GM12878 (cell line): ENCODE measurements at regions of chr1 and their contacts with region 1.

Region 1: GRCh38 chr1:182614796-182615454 is 10.7 kb upstream of the RGS16 start:
- DNase-seq: no peak
- ATAC-seq: peak; percentile 62
- H3K4me3 ChIP-seq: peak overlapping the region; percentile 63
- H3K27ac ChIP-seq: peak overlapping the region; percentile 95
- H3K4me1 ChIP-seq: peaks cover 66% of the 10 kb centered on the region
- H3K27me3 ChIP-seq: no peaks in the 10 kb centered on the region
- CTCF ChIP-seq: no peak
- EP300 ChIP-seq: peak in 1 of 2 experiments; percentile 54; a peak in 3 of 4 replicates
- POLR2A ChIP-seq: peak; percentile 84
- RAD21 ChIP-seq: peak; percentile 12; the same call in 1 of the 2 replicates

Region 2: GRCh38 chr1:182493063-182493462 is 121.9 kb before region 1 on chr1:
- CTCF ChIA-PET with region 1: no interaction called
- POLR2A ChIA-PET with region 1: no interaction called
- RAD21 ChIA-PET with region 1: no interaction called
- SMC1A ChIA-PET with region 1: no interaction called
- in situ Hi-C with region 1: no loop called
- intact Hi-C with region 1: no loop called
- DNase-seq: no peak
- ATAC-seq: no peak
- H3K4me3 ChIP-seq: no peak overlapping the region
- H3K27ac ChIP-seq: no peak overlapping the region
- H3K4me1 ChIP-seq: no peaks in the 10 kb centered on the region
- H3K27me3 ChIP-seq: no peaks in the 10 kb centered on the region; a peak in 2 of 4 replicates
- CTCF ChIP-seq: no peak
- EP300 ChIP-seq: no peak
- POLR2A ChIP-seq: no peak
- RAD21 ChIP-seq: no peak

Region 3: DNA sequence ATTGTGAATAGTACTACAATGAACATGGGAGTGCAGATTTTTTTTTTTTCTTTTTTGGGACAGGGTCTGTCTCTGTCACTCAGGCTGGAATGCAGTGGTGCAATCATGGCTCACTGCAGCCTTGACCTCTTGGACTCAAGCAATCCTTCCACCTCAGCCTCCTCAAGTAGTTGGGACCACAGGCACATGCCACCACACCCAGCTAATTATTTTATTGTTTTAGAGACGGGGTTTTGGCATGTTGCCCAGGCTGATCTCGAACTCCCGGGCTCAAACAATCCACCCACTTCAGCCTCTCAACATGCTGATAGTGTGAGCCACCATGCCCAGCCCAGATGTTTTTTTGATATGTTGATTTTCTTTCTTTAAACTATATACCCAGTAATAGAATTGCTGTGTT is 107.3 kb before region 1 on chr1:
- CTCF ChIA-PET with region 1: no interaction called
- POLR2A ChIA-PET with region 1: no interaction called
- RAD21 ChIA-PET with region 1: no interaction called
- SMC1A ChIA-PET with region 1: no interaction called
- in situ Hi-C with region 1: no loop called
- intact Hi-C with region 1: no loop called
- DNase-seq: no peak
- ATAC-seq: no peak
- H3K4me3 ChIP-seq: no peak overlapping the region
- H3K27ac ChIP-seq: no peak overlapping the region
- H3K4me1 ChIP-seq: no peaks in the 10 kb centered on the region
- H3K27me3 ChIP-seq: no peaks in the 10 kb centered on the region
- CTCF ChIP-seq: no peak
- EP300 ChIP-seq: no peak
- POLR2A ChIP-seq: no peak
- RAD21 ChIP-seq: no peak

Region 4: DNA sequence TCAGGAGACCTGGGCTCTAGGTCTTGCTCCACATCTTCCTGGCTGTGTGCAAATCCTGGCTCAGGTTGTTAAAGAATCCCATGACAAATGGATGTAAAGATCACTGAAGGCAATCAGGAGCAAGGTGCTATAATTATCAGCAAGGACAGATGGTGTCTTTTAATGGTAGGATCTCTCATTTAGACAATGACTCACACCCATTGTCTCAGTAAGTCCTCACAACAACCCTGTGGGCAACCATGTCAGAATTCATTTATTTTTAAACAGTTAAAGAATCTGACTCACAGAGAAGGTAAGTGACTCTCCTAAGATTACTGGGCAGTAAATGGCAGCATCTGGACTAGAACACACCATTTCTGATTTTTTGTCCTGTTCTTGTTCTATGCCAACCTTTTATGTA is 58.6 kb before region 1 on chr1:
- CTCF ChIA-PET with region 1: no interaction called
- POLR2A ChIA-PET with region 1: no interaction called
- RAD21 ChIA-PET with region 1: no interaction called
- SMC1A ChIA-PET with region 1: no interaction called
- in situ Hi-C with region 1: no loop called
- intact Hi-C with region 1: no loop called
- DNase-seq: no peak
- ATAC-seq: no peak
- H3K4me3 ChIP-seq: no peak overlapping the region
- H3K27ac ChIP-seq: no peak overlapping the region
- H3K4me1 ChIP-seq: no peaks in the 10 kb centered on the region
- H3K27me3 ChIP-seq: no peaks in the 10 kb centered on the region
- CTCF ChIP-seq: no peak
- EP300 ChIP-seq: no peak
- POLR2A ChIP-seq: no peak
- RAD21 ChIP-seq: no peak

Region 5: DNA sequence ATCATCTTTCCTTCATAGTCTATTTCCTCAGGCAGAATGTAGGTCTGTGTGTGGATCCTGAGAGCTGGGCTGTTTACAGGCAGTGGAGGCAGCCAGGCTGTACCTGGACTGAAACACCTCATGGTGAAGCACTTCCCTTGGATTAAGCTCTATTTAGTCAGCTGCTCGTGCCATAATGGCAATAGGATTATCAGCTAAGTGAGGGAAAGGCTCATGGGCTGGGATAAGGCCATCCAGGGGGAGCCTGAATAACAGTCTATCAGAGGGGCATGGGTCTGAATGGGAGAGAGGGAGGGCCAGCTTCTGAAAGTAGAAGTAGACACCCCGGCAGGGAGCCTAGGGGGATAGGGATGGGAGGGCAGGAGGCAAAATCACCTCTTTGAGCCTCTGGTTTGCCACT is 34.2 kb before region 1 on chr1:
- CTCF ChIA-PET with region 1: no interaction called
- POLR2A ChIA-PET with region 1: no interaction called
- RAD21 ChIA-PET with region 1: no interaction called
- SMC1A ChIA-PET with region 1: no interaction called
- in situ Hi-C with region 1: no loop called
- intact Hi-C with region 1: no loop called
- DNase-seq: no peak
- ATAC-seq: no peak
- H3K4me3 ChIP-seq: no peak overlapping the region
- H3K27ac ChIP-seq: no peak overlapping the region
- H3K4me1 ChIP-seq: no peaks in the 10 kb centered on the region
- H3K27me3 ChIP-seq: no peaks in the 10 kb centered on the region
- CTCF ChIP-seq: no peak
- EP300 ChIP-seq: no peak
- POLR2A ChIP-seq: no peak
- RAD21 ChIP-seq: no peak

Region 6: DNA sequence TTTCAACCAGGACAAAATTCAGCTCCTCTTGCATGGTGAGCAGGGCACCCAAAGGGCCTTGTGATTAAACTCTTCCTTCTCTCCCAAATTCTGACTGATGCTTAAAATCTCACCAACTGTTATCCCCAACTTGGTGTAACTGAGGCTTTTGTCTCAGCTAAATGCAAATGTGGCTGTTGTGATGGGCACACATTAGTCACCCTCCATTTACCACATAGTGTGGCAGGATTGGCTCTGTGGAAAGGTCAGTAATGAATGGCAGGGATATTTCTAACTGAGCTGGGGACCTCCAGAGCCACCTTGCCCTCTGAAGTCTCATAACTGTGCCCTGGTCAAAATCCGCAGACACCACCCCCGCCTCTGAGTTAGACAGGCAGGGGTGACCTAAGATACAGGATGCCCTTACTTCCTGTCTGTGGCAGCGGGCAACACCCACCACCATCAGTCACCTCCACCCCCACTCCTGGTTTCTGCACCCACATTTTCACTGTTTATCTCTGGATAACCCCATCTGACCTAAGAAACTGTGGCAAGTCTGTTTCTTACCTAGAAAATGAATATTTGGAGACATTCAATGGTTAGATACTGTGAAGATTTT is 14.7 kb after region 1 on chr1:
- CTCF ChIA-PET with region 1: interaction called, 12 read pairs
- POLR2A ChIA-PET with region 1: interaction called, 51 read pairs
- RAD21 ChIA-PET with region 1: interaction called, 15 read pairs
- SMC1A ChIA-PET with region 1: interaction called, 238 read pairs
- in situ Hi-C with region 1: no loop called
- intact Hi-C with region 1: loop called (anchors 1 kb)
- DNase-seq: no peak
- ATAC-seq: peak; percentile 88
- H3K4me3 ChIP-seq: no peak overlapping the region
- H3K27ac ChIP-seq: no peak overlapping the region
- H3K4me1 ChIP-seq: peaks cover 52% of the 10 kb centered on the region
- H3K27me3 ChIP-seq: no peaks in the 10 kb centered on the region
- CTCF ChIP-seq: no peak
- EP300 ChIP-seq: peak; percentile 26 to 61; a peak in 2 of 4 replicates
- POLR2A ChIP-seq: no peak
- RAD21 ChIP-seq: no peak

Region 7: DNA sequence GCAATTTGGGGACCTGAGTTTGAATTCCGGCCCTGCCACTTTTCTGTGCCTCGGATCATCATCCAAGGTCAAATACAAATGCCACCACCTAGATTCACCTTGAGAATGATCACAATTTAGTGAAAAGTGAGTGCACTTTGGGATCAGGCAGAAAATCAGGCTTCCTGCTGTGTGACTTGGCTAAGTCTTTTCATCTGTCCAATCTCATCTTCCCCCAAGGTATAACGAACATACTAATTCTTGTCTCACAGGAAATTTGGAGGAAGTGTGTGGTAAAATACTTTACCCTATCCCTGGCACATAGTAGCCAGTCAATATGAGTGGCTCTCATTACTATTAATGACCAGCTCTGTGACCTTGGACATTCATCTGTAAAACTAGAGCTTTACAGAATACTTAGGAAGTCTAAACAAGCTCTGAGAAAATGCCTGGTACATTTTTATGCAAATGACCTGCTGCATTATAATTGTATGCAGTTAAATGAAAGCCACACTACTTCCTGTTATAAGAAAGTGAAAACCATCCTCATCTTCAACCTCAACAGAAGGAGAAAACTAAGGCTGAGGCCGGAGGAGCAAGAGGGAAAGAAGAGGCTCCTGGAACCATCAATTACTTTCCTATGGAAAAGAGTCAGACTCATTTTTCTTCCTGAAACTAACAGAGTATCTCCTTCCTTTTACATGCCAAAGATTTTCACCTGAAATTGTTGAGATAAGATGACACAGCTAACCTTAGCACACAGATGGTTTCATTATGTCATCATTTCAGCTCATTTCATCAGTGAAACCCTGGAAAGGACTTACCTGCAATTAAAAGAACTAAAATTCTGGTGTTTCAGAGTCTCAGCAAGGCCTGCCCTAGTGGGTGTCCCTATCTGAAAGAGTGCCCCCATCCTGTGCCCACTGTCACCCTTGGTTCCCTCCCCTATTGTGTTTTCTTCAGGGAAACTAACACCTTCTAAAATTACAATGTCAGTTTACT is 102.1 kb after region 1 on chr1:
- CTCF ChIA-PET with region 1: no interaction called
- POLR2A ChIA-PET with region 1: no interaction called
- RAD21 ChIA-PET with region 1: interaction called, 3 read pairs
- SMC1A ChIA-PET with region 1: interaction called, 5 read pairs
- in situ Hi-C with region 1: no loop called
- intact Hi-C with region 1: loop called (anchors 5 kb)
- DNase-seq: peak; percentile 16
- ATAC-seq: peak; percentile 62
- H3K4me3 ChIP-seq: no peak overlapping the region
- H3K27ac ChIP-seq: no peak overlapping the region
- H3K4me1 ChIP-seq: peaks cover 3% of the 10 kb centered on the region
- H3K27me3 ChIP-seq: no peaks in the 10 kb centered on the region
- CTCF ChIP-seq: no peak
- EP300 ChIP-seq: no peak
- POLR2A ChIP-seq: no peak
- RAD21 ChIP-seq: no peak